ENCODE measurements at regions of chr7 and their contacts with region 1.

Region 1: GRCh38 chr7:38630720-38631673 is at the start of gene AMPH:
- DNase-seq: no peak
- ATAC-seq: no peak
- H3K4me3 ChIP-seq: peak within 1 kb of the TSS in 1 of 2 experiments; percentile 2; a peak in 1 of 4 replicates
- H3K27ac ChIP-seq: no peak within 1 kb of the TSS
- H3K4me1 ChIP-seq: no peaks in the 10 kb centered on the region
- H3K27me3 ChIP-seq: peaks cover 6% of the 10 kb centered on the region
- CTCF ChIP-seq: no peak
- total RNA-seq, gene AMPH: not detected

Region 2: DNA sequence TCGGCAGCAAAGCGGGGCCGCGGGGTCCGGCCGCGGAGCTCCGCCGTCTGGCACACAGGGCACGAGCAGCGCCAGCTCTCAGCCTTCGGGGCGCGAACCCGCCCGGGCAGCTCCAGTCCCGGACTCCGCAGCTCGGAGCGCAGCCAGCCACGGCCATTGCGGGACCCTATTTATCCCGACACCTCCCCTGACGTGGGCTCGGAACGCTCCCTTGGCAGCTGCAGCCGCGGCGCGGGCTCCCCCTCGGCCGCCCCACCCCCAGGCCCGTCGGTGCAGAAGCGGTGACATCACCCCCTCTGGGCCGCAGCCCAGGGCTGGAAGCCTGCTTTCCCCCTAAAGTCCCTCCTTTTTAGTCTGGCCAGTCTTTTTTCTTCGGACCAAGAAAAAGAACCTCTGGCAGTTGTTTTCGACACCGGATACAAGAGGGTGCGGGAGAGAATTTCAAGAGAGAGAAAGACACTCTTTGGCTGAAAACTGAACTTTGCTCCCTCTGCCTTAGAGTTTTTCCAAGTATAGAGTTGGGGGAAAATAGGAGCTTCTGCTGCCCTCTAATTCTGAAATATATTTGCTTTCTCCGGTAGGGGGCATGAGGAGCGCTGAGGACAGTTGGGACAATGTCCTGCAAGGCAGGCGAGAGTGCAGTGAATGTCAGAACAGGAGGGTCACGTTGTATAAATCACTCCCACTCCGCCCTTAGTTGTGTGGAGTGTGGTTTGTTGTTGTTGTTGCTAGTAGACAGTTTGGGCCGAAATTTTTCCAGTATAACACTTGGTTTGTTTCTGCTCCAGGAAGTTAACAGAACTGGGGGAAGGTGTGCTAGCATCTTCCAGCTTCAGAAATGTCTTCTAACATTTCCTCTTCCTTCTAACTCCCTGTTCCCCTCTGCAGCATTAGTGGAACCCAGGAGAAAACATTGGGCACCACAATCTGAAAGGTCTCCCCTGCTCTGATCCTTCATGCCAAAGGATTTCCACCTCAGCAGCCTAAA is 714.0 kb before region 1 on chr7 and contains the start of gene SFRP4:
- CTCF ChIA-PET with region 1: no interaction called
- POLR2A ChIA-PET with region 1: no interaction called
- in situ Hi-C with region 1: no loop called
- intact Hi-C with region 1: no loop called
- DNase-seq: peak; percentile 51
- ATAC-seq: peak; percentile 66
- H3K4me3 ChIP-seq: peak within 1 kb of the TSS; percentile 45 to 60
- H3K27ac ChIP-seq: no peak within 1 kb of the TSS
- H3K4me1 ChIP-seq: peaks cover 20% of the 10 kb centered on the region
- H3K27me3 ChIP-seq: peaks cover 22% of the 10 kb centered on the region
- CTCF ChIP-seq: peak; percentile 94
- total RNA-seq, gene SFRP4: 0.74 TPM

Region 3: DNA sequence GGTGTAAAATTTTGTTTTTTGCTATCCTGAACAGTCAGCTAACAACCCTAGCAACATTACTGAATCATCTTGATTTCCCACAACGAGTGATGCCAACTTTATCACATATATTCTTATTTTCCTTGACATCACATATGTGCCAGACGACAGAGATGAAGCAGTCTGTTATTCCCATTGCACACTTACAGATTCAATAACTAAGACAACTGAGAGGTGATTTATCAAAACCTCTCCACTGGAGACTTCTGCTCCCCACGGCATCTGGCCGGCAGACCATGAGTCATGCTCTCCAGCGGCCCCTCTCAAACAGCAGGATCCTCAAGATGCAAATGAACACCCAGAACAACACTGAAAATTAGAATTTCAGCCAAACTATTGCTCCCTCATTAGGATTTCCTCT is 56.9 kb before region 1 on chr7:
- CTCF ChIA-PET with region 1: no interaction called
- POLR2A ChIA-PET with region 1: no interaction called
- in situ Hi-C with region 1: no loop called
- intact Hi-C with region 1: loop called (anchors 10 kb)
- DNase-seq: no peak
- ATAC-seq: no peak
- H3K4me3 ChIP-seq: no peak overlapping the region
- H3K27ac ChIP-seq: no peak overlapping the region
- H3K4me1 ChIP-seq: no peaks in the 10 kb centered on the region
- H3K27me3 ChIP-seq: no peaks in the 10 kb centered on the region; the same call in 1 of the 2 replicates
- CTCF ChIP-seq: no peak

Region 4: DNA sequence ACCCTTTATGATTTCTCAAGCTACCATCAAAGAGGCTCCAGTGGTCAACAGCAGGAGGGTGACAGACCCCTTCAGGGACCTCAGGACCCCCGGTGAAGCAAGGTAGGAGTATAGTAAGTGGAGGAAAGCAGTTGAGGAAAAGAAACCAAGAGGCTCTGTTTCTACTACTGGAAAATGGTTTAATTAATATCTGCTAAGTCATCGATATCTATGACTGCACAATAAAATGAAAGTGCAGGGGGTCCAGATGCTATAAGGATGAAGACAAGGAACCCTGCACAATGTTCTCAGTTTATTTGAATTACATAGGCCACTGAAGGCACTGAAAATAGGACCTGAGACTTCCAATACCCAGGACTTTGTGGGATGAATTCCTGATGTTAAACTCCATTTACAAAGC is 23.5 kb before region 1 on chr7:
- CTCF ChIA-PET with region 1: interaction called, 10 read pairs
- POLR2A ChIA-PET with region 1: no interaction called
- in situ Hi-C with region 1: no loop called
- intact Hi-C with region 1: no loop called
- DNase-seq: no peak
- ATAC-seq: no peak
- H3K4me3 ChIP-seq: no peak overlapping the region
- H3K27ac ChIP-seq: no peak overlapping the region
- H3K4me1 ChIP-seq: no peaks in the 10 kb centered on the region
- H3K27me3 ChIP-seq: peaks cover 3% of the 10 kb centered on the region; the same call in 1 of the 2 replicates
- CTCF ChIP-seq: no peak

Region 5: DNA sequence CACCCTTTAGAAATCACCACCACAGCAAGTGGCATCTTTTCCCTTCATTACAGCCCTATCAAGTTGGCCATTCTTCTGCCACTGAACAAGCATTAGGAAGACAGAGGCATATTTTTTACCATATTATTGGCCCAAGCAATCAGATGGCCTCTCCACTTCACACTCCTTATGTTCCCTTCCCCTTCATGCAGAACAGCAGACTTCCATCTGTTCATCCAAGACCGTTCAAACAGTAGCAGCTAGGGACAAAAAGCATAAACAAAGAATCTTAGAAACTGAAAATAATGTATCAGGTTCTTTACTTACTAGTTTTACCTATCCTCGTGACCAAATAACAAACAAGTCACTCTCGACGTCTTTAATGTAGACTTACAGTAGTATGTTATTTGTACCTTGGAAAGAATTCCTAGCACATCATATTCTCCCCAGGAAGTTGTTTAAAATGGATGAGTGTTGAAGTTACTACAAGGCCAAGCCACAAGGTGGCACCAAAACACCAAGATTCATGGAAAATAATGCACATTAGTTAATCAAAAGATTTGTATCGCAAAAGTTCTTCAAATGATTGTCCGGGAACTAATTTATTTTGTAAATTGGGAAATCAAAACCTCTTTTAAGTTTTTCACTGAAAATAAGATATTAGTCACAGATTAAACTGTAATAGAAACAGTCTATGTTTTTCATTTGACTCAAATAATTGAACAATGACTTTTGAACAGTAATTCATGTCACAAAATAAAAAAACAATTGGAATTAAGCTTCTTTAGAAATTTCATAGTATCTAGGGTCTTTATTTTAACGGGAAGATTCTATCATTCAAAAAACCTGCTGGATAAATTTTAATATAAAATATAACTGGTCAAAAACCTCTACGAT is 165.9 kb after region 1 on chr7:
- CTCF ChIA-PET with region 1: no interaction called
- POLR2A ChIA-PET with region 1: no interaction called
- in situ Hi-C with region 1: no loop called
- intact Hi-C with region 1: no loop called
- DNase-seq: peak; percentile 39
- ATAC-seq: no peak
- H3K4me3 ChIP-seq: no peak overlapping the region
- H3K27ac ChIP-seq: no peak overlapping the region
- H3K4me1 ChIP-seq: no peaks in the 10 kb centered on the region
- H3K27me3 ChIP-seq: no peaks in the 10 kb centered on the region
- CTCF ChIP-seq: peak; percentile 78